Naive thymus-derived CD4-positive, alpha-beta T cell (primary cell): ENCODE measurements at regions of chr7 and their contacts with region 1.

Region 1: GRCh38 chr7:10939911-10940703 is 33.6 kb upstream of the PHF14 start:
- DNase-seq: peak; percentile 86 to 95 (median 90)
- ATAC-seq: peak; percentile 94
- H3K4me3 ChIP-seq: peak overlapping the region; percentile 83
- H3K4me3 Mint-ChIP-seq: no peak overlapping the region
- H3K27ac ChIP-seq: peak overlapping the region; percentile 91
- H3K27ac Mint-ChIP-seq: no peak overlapping the region
- H3K4me1 ChIP-seq: peaks cover 0 to 7% of the 10 kb centered on the region in 2 donors
- H3K4me1 Mint-ChIP-seq: peaks cover 8 to 50% (median 32%) of the 10 kb centered on the region in 7 donors
- H3K27me3 ChIP-seq: no peaks in the 10 kb centered on the region
- H3K27me3 Mint-ChIP-seq: no peaks in the 10 kb centered on the region

Region 2: DNA sequence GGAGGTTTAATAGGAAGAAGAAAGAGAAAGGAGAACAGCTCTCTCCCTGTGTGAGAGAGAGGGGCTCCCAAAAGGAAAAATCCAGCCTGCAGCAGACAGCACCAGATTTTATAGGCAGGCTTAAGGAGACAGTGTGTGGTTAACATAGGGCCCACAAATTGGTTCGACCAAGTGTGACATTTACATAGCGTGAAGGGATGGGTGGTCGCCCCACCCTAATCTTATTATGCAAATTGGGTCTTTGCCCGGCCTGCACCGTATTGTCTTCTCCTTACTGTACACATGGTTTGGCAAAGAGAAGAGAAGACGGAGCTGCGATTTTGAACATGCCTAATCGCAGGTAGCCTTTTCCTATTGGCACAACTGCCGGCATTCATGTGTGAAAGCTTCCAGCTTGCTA is 1750.4 kb before region 1 on chr7:
- CTCF ChIA-PET with region 1: no interaction called
- POLR2A ChIA-PET with region 1: no interaction called
- intact Hi-C with region 1: no loop called
- DNase-seq: no peak
- ATAC-seq: no peak
- H3K4me3 ChIP-seq: no peak overlapping the region
- H3K4me3 Mint-ChIP-seq: no peak overlapping the region
- H3K27ac ChIP-seq: no peak overlapping the region
- H3K27ac Mint-ChIP-seq: peak overlapping the region in 1 of 9 donors; percentile 42
- H3K4me1 ChIP-seq: no peaks in the 10 kb centered on the region
- H3K4me1 Mint-ChIP-seq: no peaks in the 10 kb centered on the region
- H3K27me3 ChIP-seq: no peaks in the 10 kb centered on the region
- H3K27me3 Mint-ChIP-seq: no peaks in the 10 kb centered on the region

Region 3: GRCh38 chr7:10973061-10973944 is 33.2 kb after region 1 on chr7 and contains the start of gene PHF14:
- CTCF ChIA-PET with region 1: interaction called, 3 read pairs
- POLR2A ChIA-PET with region 1: interaction called, 79 read pairs
- intact Hi-C with region 1: loop called (anchors 1 kb)
- DNase-seq: peak; percentile 86 to 97 (median 95)
- ATAC-seq: peak; percentile 96
- H3K4me3 ChIP-seq: peak within 1 kb of the TSS; percentile 90
- H3K4me3 Mint-ChIP-seq: peak within 1 kb of the TSS; percentile 77 to 95 (median 92)
- H3K27ac ChIP-seq: peak within 1 kb of the TSS; percentile 71
- H3K27ac Mint-ChIP-seq: peak within 1 kb of the TSS; percentile 85 to 97 (median 94)
- H3K4me1 ChIP-seq: peaks cover 9 to 20% of the 10 kb centered on the region in 2 donors
- H3K4me1 Mint-ChIP-seq: peaks cover 14 to 54% (median 38%) of the 10 kb centered on the region in 7 donors
- H3K27me3 ChIP-seq: no peaks in the 10 kb centered on the region
- H3K27me3 Mint-ChIP-seq: peaks cover 5 to 22% (median 12%) of the 10 kb centered on the region in 5 donors
- total RNA-seq, gene PHF14: 29.8 to 41.3 (median 36.7) TPM

Region 4: GRCh38 chr7:11035661-11036060 is 95.6 kb after region 1 on chr7:
- CTCF ChIA-PET with region 1: interaction called, 4 read pairs
- POLR2A ChIA-PET with region 1: no interaction called
- intact Hi-C with region 1: loop called in 1 of 2 experiments (anchors 5 kb)
- DNase-seq: no peak
- ATAC-seq: no peak
- H3K4me3 ChIP-seq: no peak overlapping the region
- H3K4me3 Mint-ChIP-seq: no peak overlapping the region
- H3K27ac ChIP-seq: no peak overlapping the region
- H3K27ac Mint-ChIP-seq: no peak overlapping the region
- H3K4me1 ChIP-seq: no peaks in the 10 kb centered on the region
- H3K4me1 Mint-ChIP-seq: peaks cover 0 to 3% (median 0%) of the 10 kb centered on the region in 7 donors
- H3K27me3 ChIP-seq: no peaks in the 10 kb centered on the region
- H3K27me3 Mint-ChIP-seq: no peaks in the 10 kb centered on the region

Region 5: GRCh38 chr7:11212080-11212711 is 272.1 kb after region 1 on chr7:
- CTCF ChIA-PET with region 1: interaction called, 5 read pairs
- POLR2A ChIA-PET with region 1: interaction called, 5 read pairs
- intact Hi-C with region 1: loop called (anchors 1 kb)
- DNase-seq: peak in 8 of 9 donors; percentile 2 to 51 (median 37)
- ATAC-seq: peak; percentile 73
- H3K4me3 ChIP-seq: no peak overlapping the region
- H3K4me3 Mint-ChIP-seq: no peak overlapping the region
- H3K27ac ChIP-seq: no peak overlapping the region
- H3K27ac Mint-ChIP-seq: no peak overlapping the region
- H3K4me1 ChIP-seq: no peaks in the 10 kb centered on the region
- H3K4me1 Mint-ChIP-seq: peaks cover 0 to 4% (median 0%) of the 10 kb centered on the region in 7 donors
- H3K27me3 ChIP-seq: no peaks in the 10 kb centered on the region
- H3K27me3 Mint-ChIP-seq: peaks cover 0 to 20% (median 5%) of the 10 kb centered on the region in 5 donors